ENCODE measurements at regions of chr15 and their contacts with region 1.

Region 1: DNA sequence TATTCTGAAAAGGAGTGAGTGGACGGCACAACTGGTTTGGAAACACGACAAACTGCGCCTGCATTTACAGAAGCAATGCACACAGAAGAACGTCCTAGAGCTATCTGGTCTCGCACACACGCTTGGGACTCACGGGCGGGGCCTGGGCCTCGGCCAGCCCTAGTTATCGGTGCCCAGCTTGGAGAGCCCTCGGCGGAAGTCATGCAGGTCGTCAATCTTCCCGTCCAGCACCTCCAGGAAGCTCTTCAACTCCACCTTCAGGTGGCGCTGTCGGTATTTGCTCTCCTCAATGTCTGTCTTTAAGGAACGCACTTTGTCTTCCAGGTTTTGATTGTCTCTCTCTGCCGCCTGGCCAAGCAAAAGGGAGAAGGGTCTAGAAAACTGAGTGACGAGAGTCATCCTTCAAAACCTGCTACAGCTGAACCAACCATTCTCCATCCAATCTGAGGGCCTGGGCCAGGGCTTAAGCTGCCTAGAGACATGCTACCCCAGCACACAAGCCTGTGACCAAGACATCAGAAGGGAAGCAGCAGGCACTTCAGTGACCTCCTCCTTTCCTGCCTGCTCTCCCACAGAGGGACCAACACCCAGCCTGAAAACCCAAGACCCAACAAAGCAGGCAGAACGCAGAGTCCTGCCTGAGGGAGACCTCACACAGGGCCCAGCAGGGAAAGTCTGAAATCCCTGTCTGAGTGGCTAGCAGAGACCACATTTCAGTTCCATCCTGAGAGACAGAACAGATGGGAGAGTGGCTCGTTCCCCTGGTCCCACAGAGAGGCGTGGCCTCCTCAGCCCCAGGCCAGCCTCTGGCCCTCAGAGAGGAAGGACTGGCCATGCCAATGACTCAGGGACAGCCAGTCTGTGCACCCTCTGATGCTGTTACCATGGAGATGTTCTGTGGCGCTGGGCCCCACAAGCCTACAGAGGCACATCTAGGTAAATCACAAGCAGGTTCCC is 40.4 kb downstream of the WHAMM start:
- DNase-seq: peak in 6 of 10 donors; percentile 28 to 91 (median 58)

Region 2: DNA sequence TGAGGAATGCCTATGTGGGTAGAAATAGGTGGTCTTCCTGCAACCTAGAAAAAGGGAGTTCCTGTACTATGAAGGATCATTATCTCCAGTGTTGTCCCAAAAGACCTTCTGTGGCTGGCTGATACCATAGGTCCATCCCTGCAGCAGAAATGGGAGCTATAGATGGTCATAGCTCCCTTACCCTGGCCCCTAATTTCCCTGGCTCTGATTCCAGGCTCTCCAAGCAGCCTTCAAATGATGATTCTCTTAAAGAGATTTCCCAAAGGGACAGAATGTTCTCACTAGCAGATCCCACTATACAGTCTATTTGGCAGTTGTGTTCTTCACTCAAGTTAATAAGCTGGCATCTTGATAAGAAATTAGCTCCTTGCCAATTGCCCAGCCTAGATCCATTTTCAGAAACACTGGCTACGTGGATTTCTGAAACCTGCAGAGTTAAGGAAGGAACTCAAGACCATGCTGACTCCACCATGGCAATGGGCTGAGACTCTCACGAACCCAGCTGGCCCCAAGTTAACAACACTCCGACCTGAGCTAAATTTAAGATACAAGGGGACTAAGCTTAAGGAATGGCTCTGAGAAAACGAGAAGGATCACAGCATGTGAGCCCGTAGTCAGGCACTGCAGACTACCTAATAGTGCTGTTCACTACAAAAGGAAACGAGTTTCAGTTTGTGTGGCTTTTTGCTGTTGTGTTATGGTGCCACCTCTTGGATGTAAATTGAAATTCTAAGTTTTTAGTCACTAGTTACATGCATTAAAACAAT is 150.3 kb after region 1 on chr15:
- intact Hi-C with region 1: loop called (anchors 10 kb)
- DNase-seq: no peak

Measured in posterior cingulate gyrus (tissue), 11 donors.